Sciatic nerve (tissue), 2 donors: ENCODE measurements at regions of chr12 and their contacts with region 1.

Region 1: GRCh38 chr12:46661110-46661845 is 164.5 kb downstream of the SLC38A4 start:
- DNase-seq: no peak
- ATAC-seq: peak; percentile 89

Region 2: DNA sequence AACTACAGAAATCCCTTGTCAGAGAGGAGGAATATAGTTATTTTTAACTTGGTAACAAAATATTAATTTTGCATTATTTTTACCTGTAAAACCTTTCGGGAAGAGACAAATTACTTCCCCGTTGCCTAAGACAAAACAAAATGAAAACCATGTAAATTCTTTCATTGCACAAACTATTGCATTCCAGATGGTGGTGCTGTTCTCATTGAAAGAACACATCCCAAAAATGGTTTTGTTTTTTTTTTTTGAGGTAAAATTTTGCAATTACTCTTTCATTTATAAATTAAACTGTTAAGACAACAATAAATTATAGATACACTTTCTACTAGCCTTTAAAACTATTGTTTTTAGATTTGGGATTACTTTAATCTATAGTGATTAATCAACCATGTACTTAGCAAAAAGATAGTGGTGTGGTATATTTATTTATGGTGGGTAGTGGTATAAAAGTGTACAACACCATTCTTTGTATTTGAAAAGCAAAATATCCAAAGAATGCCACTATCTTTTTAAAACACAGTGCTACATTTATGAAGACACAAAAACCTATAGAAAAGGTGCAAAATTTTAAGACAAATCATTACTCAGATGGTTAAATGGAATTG is 507.9 kb before region 1 on chr12:
- intact Hi-C with region 1: no loop called
- DNase-seq: no peak
- ATAC-seq: peak; percentile 55

Region 3: DNA sequence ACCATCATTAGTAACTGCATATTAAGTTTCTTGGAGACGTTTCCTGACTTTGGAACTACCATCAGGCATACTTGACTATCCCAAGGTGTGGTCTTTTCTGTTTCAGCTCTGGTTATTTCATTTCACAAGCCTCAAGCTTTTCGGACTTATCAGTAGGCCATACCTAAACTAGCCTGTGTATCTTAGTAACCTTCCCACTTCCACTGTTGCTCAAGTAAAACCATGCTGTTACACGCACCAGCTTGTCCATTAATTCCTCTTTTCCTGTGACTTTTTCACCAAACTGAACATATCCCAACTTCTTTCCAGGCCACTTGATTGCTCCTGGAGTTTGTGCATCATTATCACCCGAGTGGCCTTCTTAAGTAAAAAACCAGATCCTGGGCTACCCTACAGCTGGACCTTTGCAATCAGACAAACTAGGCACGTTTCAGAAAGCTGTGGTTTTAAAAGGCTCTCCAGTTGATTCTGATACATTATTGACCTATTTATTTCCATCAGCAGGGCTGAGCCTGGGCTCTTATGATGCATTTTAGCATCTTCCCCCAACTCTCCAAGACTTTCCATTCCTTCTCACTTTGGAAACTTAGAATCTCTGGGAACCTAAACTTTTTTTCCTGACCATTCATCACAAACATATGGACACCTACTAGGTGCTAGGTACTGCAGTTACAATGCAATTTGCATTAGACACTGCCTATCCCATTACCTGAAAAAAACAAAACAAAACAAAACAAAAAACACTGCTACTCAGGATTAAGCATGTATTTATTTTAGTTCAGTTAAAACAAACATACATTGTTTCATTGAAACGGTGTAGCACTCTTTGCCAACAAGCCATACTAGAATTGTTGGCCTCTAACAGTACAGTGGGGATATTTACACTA is 303.6 kb before region 1 on chr12:
- intact Hi-C with region 1: loop called (anchors 10 kb)
- DNase-seq: no peak
- ATAC-seq: peak; percentile 45

Region 4: GRCh38 chr12:47367912-47368537 is 706.7 kb after region 1 on chr12:
- intact Hi-C with region 1: no loop called
- DNase-seq: no peak
- ATAC-seq: no peak

Region 5: DNA sequence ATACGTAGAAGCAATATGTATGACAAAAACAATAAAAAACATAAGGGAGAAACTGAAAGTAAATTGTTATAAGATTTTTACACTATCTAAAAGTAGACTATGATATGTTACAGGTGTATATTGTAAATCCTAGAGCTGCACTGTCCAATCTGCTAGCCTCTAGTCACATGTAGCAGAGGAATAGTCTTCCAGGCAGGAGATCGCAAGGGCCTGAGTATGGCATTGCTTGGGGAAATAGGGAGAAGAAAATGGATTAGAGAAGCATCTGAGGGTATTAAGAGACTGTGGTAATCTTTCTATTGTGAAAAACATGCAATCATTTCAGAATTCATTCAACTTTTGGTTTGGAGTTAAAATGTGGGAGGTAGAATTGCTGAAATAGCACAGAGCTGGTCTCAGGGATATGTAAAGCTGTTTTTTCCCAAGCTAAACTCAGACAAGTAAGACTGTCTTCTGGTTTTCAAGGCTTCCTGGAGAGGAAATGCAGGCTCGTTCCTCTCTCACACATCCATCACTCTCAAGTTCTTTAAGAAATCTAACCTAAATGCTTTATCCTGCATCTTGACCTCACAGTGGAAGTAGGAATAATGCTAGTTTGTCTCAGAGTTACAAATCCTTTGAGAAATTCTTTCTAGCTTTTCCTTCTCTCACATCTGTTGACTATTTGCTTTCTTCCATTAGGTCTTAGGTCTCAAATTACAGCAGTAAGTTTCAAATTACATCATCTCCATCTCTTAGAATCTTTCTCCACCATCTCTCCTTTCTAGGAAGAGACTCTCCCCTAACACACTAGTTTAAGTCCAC is 1514.5 kb after region 1 on chr12:
- intact Hi-C with region 1: no loop called
- DNase-seq: no peak
- ATAC-seq: no peak